ENCODE measurements at regions of chr1 and their contacts with region 1.

Region 1: DNA sequence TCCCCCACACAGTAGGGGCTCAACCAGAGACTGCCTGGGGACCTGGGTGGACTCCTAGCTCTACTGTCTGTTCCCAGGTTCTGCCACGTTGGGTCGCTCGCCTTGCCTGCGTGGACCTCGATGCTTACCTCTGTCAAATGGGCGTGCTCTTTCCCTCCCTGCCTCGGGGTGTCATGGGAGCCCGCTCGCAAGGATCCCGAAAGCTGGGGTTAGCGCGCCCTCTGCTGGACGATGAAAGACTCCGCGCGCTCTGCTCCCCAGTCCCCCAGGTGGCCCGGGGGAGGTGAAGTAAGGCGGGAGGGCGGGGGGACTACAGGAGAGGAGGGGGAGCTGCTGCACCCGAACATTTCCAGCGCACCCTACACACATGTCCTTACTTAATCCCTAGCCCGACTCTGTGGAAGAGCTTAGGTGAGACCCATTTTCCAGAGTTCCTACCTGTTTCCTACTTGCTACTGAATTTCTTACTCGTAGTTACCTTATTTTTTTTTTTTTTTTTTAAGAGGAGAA is 2.3 kb upstream of the BSND start:
- DNase-seq: peak; percentile 77 to 82 (median 80)
- ATAC-seq: peak; percentile 83 to 95 (median 93)
- H3K4me3 ChIP-seq: no peak overlapping the region
- H3K27ac ChIP-seq: no peak overlapping the region
- H3K4me1 ChIP-seq: peaks cover 0 to 7% (median 0%) of the 10 kb centered on the region in 4 donors
- H3K27me3 ChIP-seq: no peaks in the 10 kb centered on the region
- CTCF ChIP-seq: peak; percentile 70 to 78 (median 74)
- POLR2A ChIP-seq: no peak

Region 2: GRCh38 chr1:54812801-54813484 is 183.5 kb before region 1 on chr1:
- intact Hi-C with region 1: no loop called
- DNase-seq: no peak
- ATAC-seq: no peak
- H3K4me3 ChIP-seq: no peak overlapping the region
- H3K27ac ChIP-seq: no peak overlapping the region
- H3K4me1 ChIP-seq: peaks cover 0 to 20% (median 6%) of the 10 kb centered on the region in 4 donors
- H3K27me3 ChIP-seq: no peaks in the 10 kb centered on the region
- CTCF ChIP-seq: no peak
- POLR2A ChIP-seq: no peak

Region 3: GRCh38 chr1:54944610-54945544 is 51.5 kb before region 1 on chr1:
- intact Hi-C with region 1: loop called (anchors 5 kb)
- DNase-seq: peak; percentile 65 to 75 (median 65)
- ATAC-seq: peak; percentile 89 to 94 (median 91)
- H3K4me3 ChIP-seq: peak overlapping the region in 1 of 3 donors; percentile 21
- H3K27ac ChIP-seq: no peak overlapping the region
- H3K4me1 ChIP-seq: peaks cover 0 to 9% (median 0%) of the 10 kb centered on the region in 4 donors
- H3K27me3 ChIP-seq: no peaks in the 10 kb centered on the region
- CTCF ChIP-seq: peak; percentile 65 to 87 (median 84)
- POLR2A ChIP-seq: no peak

Region 4: DNA sequence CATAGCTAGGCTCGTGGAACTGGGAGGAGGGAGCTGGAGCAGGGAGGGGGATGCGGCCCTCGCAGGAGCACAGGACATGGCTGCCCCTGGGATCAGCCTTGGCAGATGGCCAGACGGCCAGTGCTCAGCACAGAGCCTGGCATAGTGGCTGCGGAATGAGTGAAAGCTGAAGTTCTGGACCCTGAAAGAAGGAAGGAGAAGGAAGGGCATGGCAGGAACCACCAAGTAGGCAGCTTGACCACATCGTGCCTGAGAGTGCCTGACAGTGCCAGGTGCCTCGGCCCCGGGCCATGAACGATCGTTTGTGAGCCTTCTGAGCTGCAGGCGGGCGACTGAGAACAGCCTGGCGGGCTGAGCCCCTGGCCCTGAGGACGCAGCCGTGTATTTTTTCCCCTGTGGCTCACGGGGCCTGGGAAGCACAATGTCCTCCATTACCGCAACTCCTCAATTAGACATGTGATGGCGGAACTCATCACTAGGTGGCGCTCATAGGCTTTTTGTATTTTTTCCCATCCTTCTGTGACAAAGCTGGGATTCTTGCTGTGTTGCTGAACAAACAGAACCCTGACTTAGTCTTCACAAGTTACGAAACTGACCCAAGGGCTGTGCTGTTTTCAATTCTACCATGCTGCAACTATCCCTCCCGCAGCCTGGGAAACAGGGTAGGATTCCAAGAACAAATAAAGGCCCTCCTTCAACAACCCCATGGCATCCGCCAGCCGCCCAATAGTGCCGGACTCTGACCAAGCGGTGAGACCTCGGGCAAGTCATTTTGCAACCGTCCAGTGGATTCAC is 45.8 kb before region 1 on chr1:
- intact Hi-C with region 1: loop called (anchors 5 kb)
- DNase-seq: peak; percentile 38 to 74 (median 66)
- ATAC-seq: peak; percentile 94 to 97 (median 96)
- H3K4me3 ChIP-seq: peak overlapping the region in 1 of 3 donors; percentile 33
- H3K27ac ChIP-seq: no peak overlapping the region
- H3K4me1 ChIP-seq: peaks cover 0 to 10% (median 0%) of the 10 kb centered on the region in 4 donors
- H3K27me3 ChIP-seq: no peaks in the 10 kb centered on the region
- CTCF ChIP-seq: peak; percentile 72 to 83 (median 74)
- POLR2A ChIP-seq: no peak

Region 5: DNA sequence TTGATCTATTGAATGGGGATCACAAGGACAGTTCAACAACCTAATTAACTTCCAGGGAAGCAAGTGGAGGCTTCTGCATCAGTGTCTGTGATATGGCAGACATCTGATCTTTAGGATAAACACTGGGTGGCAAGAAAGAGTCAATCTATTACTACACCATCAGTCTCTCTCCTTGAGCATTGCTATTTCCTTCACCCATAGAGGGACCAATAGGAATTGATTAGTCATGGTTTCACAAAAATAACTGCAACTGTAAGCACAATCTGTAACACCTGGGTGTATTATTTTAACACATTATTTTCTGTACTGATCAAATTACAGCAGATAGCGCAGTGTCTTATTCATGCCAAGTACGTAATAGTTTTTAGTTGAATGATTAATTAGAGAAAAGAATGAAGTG is 168.5 kb after region 1 on chr1:
- intact Hi-C with region 1: no loop called
- DNase-seq: no peak
- ATAC-seq: no peak
- H3K4me3 ChIP-seq: no peak overlapping the region
- H3K27ac ChIP-seq: no peak overlapping the region
- H3K4me1 ChIP-seq: no peaks in the 10 kb centered on the region
- H3K27me3 ChIP-seq: no peaks in the 10 kb centered on the region
- CTCF ChIP-seq: no peak
- POLR2A ChIP-seq: no peak

Measured in right lobe of liver (tissue), 6 donors.